OCI-LY7 (cell line): ENCODE measurements at regions of chr18 and their contacts with region 1.

Region 1: DNA sequence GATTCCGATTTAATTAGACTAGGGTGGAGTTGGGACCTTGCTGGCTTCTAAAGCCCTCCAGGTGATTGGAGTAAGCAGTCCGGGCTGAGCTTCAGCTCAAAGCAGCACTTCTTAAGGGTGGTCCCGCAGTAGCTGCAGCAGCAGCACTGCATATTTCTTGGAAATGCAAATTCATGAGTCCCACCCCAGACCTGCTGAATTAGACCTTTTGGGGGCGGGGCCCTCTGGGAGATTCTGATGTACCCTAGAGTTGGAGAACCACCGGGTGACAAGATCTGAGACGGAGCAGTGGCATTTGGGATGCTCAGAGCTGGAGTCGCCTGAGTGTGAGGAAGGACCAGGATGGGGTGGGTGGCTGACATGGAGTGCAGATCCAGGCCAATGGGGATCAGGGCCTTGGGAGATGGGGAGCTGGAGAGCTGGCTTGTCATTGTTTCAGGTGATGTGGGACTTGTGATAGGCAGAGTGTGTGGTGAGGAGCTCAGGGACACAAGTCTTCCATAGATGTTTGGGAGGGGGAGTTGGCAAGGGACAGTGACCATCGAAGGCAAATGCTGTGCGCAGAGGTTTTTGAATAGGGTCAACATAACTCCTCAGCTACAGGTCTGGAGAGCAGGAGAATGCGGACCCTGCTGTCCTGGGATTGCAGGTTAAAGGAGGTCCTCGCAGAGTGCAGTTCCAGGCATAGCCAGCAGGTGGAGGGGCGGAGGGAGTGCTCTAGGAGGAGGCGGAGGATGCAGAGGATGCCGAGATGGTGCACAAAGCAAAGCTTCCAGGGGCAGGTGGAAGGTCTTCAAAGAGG is 130.9 kb upstream of the RAB12 start:
- DNase-seq: peak; percentile 66
- H3K4me3 ChIP-seq: no peak overlapping the region
- H3K27ac ChIP-seq: no peak overlapping the region
- H3K4me1 ChIP-seq: no peaks in the 10 kb centered on the region
- CTCF ChIP-seq: peak; percentile 80

Region 2: GRCh38 chr18:7645756-7646155 is 832.6 kb before region 1 on chr18:
- CTCF ChIA-PET with region 1: interaction called, 12 read pairs
- POLR2A ChIA-PET with region 1: no interaction called
- intact Hi-C with region 1: no loop called
- DNase-seq: no peak
- H3K4me3 ChIP-seq: no peak overlapping the region
- H3K27ac ChIP-seq: no peak overlapping the region
- H3K4me1 ChIP-seq: no peaks in the 10 kb centered on the region
- CTCF ChIP-seq: no peak

Region 3: GRCh38 chr18:8548186-8548585 is 69.8 kb after region 1 on chr18:
- CTCF ChIA-PET with region 1: no interaction called
- POLR2A ChIA-PET with region 1: no interaction called
- intact Hi-C with region 1: loop called (anchors 10 kb)
- DNase-seq: no peak
- H3K4me3 ChIP-seq: no peak overlapping the region
- H3K27ac ChIP-seq: no peak overlapping the region
- H3K4me1 ChIP-seq: no peaks in the 10 kb centered on the region
- CTCF ChIP-seq: no peak

Region 4: GRCh38 chr18:8559612-8560186 is 81.3 kb after region 1 on chr18:
- CTCF ChIA-PET with region 1: no interaction called
- POLR2A ChIA-PET with region 1: no interaction called
- intact Hi-C with region 1: no loop called
- DNase-seq: no peak
- H3K4me3 ChIP-seq: no peak overlapping the region
- H3K27ac ChIP-seq: no peak overlapping the region
- H3K4me1 ChIP-seq: no peaks in the 10 kb centered on the region
- CTCF ChIP-seq: no peak

Region 5: DNA sequence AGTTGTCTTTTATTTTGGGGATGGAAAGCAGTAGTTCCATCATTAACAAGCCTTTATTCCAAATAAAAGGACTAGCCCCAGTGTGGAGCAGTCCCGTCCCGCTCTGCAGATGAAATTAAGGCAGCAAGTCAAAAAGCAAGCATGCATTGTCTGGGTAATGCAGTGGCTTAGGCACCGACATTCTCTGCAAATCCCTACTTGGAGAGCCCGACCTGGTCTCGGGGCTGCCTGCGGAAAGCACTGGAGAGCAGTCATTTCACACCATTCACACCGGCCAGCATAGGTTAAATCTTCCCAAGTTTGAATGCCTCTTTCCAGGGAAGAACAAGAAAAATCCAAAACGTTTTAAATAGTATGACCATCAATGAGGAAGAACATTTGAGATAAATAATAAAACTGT is 106.4 kb after region 1 on chr18:
- CTCF ChIA-PET with region 1: no interaction called
- POLR2A ChIA-PET with region 1: no interaction called
- intact Hi-C with region 1: loop called (anchors 10 kb)
- DNase-seq: no peak
- H3K4me3 ChIP-seq: no peak overlapping the region
- H3K27ac ChIP-seq: no peak overlapping the region
- H3K4me1 ChIP-seq: peaks cover 4% of the 10 kb centered on the region
- CTCF ChIP-seq: no peak